Calu3 (cell line): ENCODE measurements at regions of chr18 and their contacts with region 1.

Region 1: DNA sequence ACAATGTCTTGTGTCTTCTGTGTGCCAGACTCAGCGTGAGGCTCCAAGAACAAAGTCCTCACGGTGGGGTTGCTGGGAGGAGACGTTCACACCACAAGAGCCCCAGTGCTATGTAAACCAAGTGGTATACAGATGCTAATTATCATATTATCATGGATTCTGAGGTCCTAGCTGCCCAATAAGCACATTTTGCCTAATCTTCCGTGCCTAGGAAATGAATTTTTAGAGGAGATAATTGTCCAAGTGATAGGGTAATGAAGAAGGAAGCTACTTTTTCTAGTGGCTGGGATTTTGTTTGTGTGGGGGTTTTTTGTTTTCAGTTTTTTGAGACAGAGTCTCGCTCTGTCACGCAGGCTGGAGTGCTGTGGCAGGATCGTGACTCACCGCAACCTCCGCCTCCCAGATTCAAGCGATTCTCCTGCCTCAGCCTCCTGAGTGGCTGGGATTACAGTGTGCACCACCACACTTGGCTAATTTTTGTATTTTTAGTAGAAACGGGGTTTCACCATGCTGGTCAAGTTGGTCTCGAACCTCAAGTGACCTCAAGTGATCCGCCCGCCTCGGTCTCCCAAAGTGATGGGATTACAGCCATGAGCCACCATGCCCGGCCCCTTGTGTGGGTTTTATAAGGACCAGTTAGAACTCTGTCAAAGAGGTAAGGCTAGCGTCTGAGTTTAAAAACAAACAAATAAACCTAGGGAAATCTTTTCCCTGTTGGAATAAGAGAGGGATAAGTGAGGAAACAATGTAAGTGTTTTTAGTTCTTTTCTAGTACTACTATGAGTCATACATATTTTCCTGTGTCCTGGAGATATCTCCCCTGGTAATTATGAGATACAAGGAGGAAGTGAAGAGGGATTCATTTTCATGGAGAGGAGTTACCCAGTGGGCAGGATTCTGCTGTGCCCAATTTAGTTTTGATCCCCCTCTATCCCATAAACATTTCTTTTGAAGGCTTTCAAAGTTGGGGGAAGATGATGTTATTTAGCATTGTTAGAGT is 9.5 kb upstream of the SMAD7 start:
- DNase-seq: no peak
- H3K4me3 Mint-ChIP-seq: no peak overlapping the region
- H3K27ac Mint-ChIP-seq: no peak overlapping the region
- H3K4me1 Mint-ChIP-seq: peaks cover 25% of the 10 kb centered on the region
- H3K27me3 Mint-ChIP-seq: peaks cover 13% of the 10 kb centered on the region
- CTCF ChIP-seq: no peak

Region 2: GRCh38 chr18:48997985-48998831 is 38.0 kb after region 1 on chr18:
- CTCF ChIA-PET with region 1: no interaction called
- intact Hi-C with region 1: loop called (anchors 1 kb)
- DNase-seq: peak; percentile 92
- H3K4me3 Mint-ChIP-seq: peak overlapping the region; percentile 50
- H3K27ac Mint-ChIP-seq: peak overlapping the region; percentile 96
- H3K4me1 Mint-ChIP-seq: peaks cover 44% of the 10 kb centered on the region
- H3K27me3 Mint-ChIP-seq: peaks cover 4% of the 10 kb centered on the region
- CTCF ChIP-seq: no peak

Region 3: DNA sequence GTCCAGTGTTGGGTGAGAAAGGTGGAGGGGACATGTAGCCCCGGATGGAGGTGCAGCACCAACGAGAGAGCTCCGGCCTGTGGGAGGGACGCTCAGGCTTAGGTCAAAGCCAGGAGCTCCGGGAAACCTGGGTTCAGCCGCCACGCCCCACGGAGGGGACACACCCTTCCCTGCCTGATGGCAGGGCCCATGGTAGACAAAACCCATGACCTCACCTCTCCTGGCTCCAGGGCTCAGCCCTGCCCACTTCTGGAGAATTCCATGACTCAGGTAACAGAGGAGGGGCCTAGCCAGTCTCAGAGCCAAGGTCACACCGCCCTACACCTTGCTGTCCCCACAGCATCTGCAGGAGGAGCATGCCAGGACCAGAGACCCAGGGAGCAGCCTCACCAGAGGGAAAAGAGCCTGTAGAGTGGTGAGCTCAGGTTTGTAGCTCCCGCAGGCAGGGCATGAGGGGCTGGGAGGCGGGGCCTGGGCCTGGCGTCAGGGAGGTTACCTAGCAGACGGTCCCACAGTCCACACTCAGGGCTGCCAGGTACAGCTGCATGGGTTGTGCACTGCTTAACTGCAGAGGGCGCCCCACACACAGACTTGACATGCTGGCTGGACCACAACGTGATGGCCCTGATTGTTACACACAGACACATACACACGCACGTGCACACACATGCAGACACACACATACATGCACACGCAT is 61.4 kb after region 1 on chr18:
- CTCF ChIA-PET with region 1: no interaction called
- intact Hi-C with region 1: no loop called
- DNase-seq: peak; percentile 85
- H3K4me3 Mint-ChIP-seq: peak overlapping the region; percentile 67
- H3K27ac Mint-ChIP-seq: peak overlapping the region; percentile 81
- H3K4me1 Mint-ChIP-seq: peaks cover 11% of the 10 kb centered on the region
- H3K27me3 Mint-ChIP-seq: no peaks in the 10 kb centered on the region
- CTCF ChIP-seq: peak; percentile 61

Region 4: DNA sequence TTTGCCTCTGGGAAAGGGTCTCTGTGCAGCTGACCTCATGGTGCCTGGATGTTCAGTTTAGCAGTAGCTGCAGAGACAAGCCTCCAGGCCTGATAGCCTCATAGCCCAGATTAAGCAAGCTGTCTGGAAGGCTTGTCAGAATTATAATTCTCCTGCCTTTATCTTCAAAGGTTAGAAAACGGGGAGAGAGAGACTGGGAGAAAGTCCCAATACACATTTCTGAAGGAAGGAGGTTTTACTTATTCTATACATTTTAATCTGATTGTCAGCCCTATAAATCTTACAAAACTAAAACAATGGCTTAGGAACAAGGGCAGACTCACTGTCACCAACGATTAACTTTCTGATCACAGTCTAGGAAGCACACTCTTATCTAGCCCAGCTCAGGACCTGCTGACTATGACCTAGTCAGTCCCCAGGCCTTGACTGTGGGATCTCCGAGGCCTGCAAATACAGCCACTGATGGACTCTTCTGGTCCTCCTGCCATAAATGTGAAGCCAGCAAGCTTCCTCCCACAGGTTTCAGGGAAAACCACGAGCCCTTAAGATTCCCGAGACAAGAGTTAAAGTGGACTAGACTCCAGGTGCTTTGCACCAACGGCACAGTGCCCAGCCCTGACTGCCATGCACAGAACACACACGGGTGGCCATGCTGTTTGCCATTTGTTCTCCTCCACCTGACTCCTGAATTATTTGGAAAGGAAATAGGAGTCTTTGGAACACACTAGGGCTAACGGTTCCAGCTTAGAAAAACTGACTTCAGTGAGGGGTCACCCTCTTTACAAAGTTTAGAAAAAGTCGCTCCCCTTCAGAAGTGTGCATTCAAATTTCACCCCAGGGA is 102.0 kb after region 1 on chr18:
- CTCF ChIA-PET with region 1: no interaction called
- intact Hi-C with region 1: no loop called
- DNase-seq: no peak
- H3K4me3 Mint-ChIP-seq: no peak overlapping the region
- H3K27ac Mint-ChIP-seq: no peak overlapping the region
- H3K4me1 Mint-ChIP-seq: no peaks in the 10 kb centered on the region
- H3K27me3 Mint-ChIP-seq: no peaks in the 10 kb centered on the region
- CTCF ChIP-seq: no peak